MCF 10A (cell line): ENCODE measurements at regions of chr19 and their contacts with region 1.

Region 1: GRCh38 chr19:19404879-19405860 is at the start of gene GATAD2A:
- DNase-seq: peak; percentile 95
- H3K4me3 Mint-ChIP-seq: peak within 1 kb of the TSS; percentile 95
- H3K27ac Mint-ChIP-seq: peak within 1 kb of the TSS; percentile 94
- H3K4me1 Mint-ChIP-seq: peaks cover 39% of the 10 kb centered on the region
- H3K27me3 Mint-ChIP-seq: no peaks in the 10 kb centered on the region
- CTCF ChIP-seq: no peak
- total RNA-seq, gene GATAD2A: 77.4 and 91.5 TPM in 2 replicates

Region 2: DNA sequence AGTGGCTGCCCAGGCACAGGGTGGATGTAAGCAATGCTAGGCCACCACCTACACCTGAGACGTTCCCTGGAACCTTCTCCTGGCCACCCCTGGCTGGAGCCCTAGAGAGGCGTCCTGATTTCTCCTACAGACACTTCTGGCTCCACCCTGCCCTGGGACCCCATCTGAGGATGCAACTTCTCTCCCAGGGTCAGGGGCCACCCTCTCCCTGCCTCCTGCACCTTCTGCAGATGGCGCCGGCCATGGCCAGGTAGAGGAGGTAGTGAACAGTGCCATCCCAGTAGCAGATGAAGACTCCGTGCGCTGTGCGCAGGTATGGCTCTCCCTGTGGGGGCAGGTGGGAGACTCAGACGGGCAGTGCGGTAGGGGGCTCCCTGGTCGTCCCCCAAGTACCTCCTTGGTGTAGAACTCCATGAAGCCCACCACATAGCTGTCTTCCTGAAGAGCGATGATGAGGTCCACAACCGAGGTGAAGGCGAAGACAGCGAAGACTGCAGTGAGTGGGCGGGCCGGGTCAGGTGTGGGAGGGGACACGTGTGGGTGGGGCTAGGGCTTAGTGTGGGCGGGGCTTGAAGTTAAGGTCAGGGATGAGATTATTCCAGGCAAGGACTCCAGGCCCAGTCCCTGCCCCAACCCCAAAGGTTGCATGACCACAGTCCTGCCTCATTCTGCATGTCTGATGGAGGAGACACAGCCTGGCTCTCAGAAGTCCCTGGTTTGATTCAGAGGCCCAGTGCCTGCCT is 135.0 kb before region 1 on chr19:
- CTCF ChIA-PET with region 1: no interaction called
- POLR2A ChIA-PET with region 1: no interaction called
- intact Hi-C with region 1: no loop called
- DNase-seq: no peak
- H3K4me3 Mint-ChIP-seq: no peak overlapping the region
- H3K27ac Mint-ChIP-seq: no peak overlapping the region
- H3K4me1 Mint-ChIP-seq: no peaks in the 10 kb centered on the region
- H3K27me3 Mint-ChIP-seq: peaks cover 11% of the 10 kb centered on the region
- CTCF ChIP-seq: no peak

Region 3: GRCh38 chr19:19366612-19367396 is 38.4 kb before region 1 on chr19:
- CTCF ChIA-PET with region 1: interaction called, 16 read pairs
- POLR2A ChIA-PET with region 1: interaction called, 38 read pairs
- intact Hi-C with region 1: loop called (anchors 1 kb)
- DNase-seq: peak; percentile 86
- H3K4me3 Mint-ChIP-seq: no peak overlapping the region
- H3K27ac Mint-ChIP-seq: peak overlapping the region; percentile 51
- H3K4me1 Mint-ChIP-seq: peaks cover 13% of the 10 kb centered on the region
- H3K27me3 Mint-ChIP-seq: no peaks in the 10 kb centered on the region
- CTCF ChIP-seq: peak; percentile 85

Region 4: DNA sequence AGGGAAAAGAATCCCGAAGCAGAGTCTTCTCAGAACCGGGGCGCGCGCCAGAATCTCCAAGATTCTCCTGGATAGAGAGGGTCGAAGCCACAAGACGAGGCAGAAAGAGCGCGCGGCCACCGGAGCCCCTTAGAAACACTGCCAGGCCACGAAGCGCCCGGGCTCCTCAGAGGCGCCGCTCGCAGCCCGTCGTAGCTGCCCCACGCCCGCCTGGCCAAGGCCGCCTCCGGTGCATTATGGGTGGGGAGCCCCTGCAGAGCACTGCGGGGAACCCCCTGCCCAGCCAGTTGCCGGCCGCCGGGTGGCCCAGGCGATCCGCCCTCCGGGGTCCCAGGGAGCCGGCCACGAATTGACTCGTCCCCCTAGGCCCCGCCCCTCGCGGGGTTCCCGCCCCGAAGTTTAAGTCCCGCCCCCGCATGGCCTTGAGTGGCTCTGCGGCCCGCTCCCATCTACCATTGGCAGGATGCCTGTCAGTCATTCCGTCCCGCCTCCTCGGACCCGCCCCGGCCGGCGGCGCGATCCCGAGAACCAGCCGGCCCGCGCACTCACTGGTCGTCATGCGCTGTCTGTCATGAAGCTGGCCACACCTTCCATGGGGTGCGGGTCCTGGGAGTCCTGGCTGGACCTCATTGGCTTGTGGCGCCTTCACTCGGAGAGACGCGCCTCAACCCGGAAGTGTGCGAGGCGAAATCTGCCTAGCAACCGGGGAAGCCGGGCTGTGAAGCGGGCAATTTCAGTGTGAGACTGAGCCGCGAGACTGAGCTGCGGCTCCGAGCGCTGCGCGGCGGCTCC is 19.9 kb before region 1 on chr19:
- CTCF ChIA-PET with region 1: interaction called, 4 read pairs
- POLR2A ChIA-PET with region 1: interaction called, 48 read pairs
- intact Hi-C with region 1: loop called (anchors 1 kb)
- DNase-seq: peak; percentile 100
- H3K4me3 Mint-ChIP-seq: peak overlapping the region; percentile 95
- H3K27ac Mint-ChIP-seq: peak overlapping the region; percentile 98
- H3K4me1 Mint-ChIP-seq: peaks cover 30% of the 10 kb centered on the region
- H3K27me3 Mint-ChIP-seq: no peaks in the 10 kb centered on the region
- CTCF ChIP-seq: no peak

Region 5: GRCh38 chr19:19418555-19419260 is 13.5 kb after region 1 on chr19:
- CTCF ChIA-PET with region 1: interaction called, 14 read pairs
- POLR2A ChIA-PET with region 1: interaction called, 3 read pairs
- intact Hi-C with region 1: no loop called
- DNase-seq: no peak
- H3K4me3 Mint-ChIP-seq: no peak overlapping the region
- H3K27ac Mint-ChIP-seq: no peak overlapping the region
- H3K4me1 Mint-ChIP-seq: peaks cover 13% of the 10 kb centered on the region
- H3K27me3 Mint-ChIP-seq: no peaks in the 10 kb centered on the region
- CTCF ChIP-seq: no peak

Region 6: GRCh38 chr19:19531951-19532805 is 127.0 kb after region 1 on chr19:
- CTCF ChIA-PET with region 1: no interaction called
- POLR2A ChIA-PET with region 1: no interaction called
- intact Hi-C with region 1: no loop called
- DNase-seq: peak; percentile 80
- H3K4me3 Mint-ChIP-seq: no peak overlapping the region
- H3K27ac Mint-ChIP-seq: no peak overlapping the region
- H3K4me1 Mint-ChIP-seq: peaks cover 11% of the 10 kb centered on the region
- H3K27me3 Mint-ChIP-seq: no peaks in the 10 kb centered on the region
- CTCF ChIP-seq: peak; percentile 89